ENCODE measurements at regions of chr12 and their contacts with region 1.

Region 1: GRCh38 chr12:93591137-93591868 is 18.8 kb downstream of the SOCS2 start:
- DNase-seq: peak; percentile 88
- ATAC-seq: peak; percentile 96

Region 2: DNA sequence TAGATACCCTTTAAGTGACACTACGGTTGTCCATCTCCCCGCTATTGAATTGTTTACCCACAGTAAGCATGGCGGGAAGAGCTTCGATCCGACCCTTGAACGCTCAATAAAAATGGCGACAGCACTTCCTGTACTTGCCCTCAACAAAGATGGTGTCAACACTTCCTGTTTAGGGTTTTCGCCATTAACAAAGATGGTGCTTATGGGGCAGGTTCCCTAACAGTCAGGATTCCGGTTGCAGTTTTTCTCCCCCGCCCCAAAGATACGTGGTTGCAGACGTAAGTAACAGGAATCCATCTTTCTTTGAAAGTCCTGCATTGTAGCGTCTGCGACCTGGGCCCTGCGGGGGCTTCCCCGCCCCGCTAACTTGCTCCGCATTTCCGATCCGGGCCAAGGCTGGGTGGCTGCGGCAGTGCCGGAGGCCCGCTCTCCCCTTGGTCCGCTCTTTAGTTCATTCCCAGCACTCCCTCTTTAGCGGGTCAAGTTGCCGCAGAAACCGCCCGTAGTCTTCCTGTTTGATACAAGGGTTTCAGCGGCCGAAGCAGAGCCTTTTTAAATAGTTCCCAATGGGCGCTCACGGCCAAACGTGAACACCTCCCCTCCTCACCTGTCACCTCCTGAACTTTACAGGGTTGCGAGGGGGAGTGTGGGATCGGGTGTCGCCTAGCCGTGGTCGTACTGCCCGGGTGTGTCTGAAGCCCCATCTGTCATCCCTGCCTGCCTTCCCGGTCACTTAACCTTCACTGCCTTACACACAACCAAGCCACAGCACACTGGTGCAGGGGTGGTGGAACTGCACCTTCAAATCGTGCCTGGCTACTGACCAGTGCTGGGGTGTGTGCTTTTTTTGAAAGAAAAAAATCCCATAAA is 86.1 kb after region 1 on chr12 and contains the start of gene CRADD:
- intact Hi-C with region 1: loop called (anchors 5 kb)
- DNase-seq: peak; percentile 78
- ATAC-seq: peak; percentile 89
- total RNA-seq, gene CRADD: 30.4 TPM

Region 3: GRCh38 chr12:93742110-93742934 is 151.0 kb after region 1 on chr12:
- intact Hi-C with region 1: loop called (anchors 5 kb)
- DNase-seq: peak; percentile 87
- ATAC-seq: peak; percentile 94